ENCODE measurements at regions of chr4 and their contacts with region 1.

Region 1: DNA sequence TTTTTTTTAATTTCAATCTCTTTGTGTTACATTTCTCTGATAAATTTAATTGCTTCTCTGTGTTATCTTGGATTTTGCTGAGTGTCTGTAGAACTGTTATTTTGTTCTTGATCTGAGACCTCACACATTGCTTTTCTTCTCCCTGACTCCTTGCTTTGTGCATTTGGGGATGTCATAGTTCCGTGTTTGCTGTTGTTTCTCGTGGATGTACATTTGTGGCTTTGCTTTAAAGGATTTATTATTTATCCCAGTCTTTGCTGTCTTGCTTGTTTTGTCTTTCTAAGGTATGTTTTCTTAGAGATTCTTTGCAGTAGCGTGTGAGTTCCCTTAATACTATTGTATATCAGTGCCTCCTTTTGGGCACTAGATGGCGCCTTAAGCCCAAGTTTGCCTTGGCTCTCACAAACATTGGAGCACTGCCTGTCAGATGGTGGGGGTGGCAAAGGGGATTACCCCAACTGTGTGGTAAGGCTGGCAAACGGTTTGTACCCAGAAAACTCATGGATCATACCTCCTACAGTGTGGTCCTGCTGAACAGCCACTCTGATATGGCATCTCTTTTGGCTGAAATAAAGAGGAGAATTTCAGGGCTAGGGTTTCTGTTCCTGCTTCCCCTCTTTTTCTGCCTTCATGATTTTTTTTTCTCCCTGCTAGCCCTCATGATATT is 96.4 kb downstream of the PGRMC2 start:
- DNase-seq: peak; percentile 84
- H3K4me3 Mint-ChIP-seq: no peak overlapping the region
- H3K27ac Mint-ChIP-seq: no peak overlapping the region
- H3K4me1 Mint-ChIP-seq: no peaks in the 10 kb centered on the region
- H3K27me3 Mint-ChIP-seq: no peaks in the 10 kb centered on the region

Region 2: DNA sequence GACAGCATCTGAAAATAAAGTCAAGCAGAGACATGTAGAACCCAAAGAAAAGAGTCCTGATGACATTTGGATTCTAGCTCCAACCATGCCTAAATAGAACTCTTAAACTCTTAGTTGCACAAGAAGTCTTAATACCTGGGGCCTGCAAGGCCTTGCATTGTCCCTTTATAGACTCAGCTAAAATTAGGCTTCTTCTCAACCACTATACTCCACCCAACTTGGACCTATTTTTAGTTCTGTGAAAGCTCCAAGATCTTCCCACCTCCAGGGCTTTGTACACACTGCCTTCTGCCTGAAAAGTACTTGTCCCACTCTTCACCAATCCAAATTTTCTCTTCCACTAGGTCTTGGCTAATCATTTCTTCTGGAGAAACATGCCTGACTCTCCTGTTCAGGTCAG is 274.1 kb before region 1 on chr4:
- CTCF ChIA-PET with region 1: no interaction called
- intact Hi-C with region 1: no loop called
- DNase-seq: no peak
- H3K4me3 Mint-ChIP-seq: no peak overlapping the region
- H3K27ac Mint-ChIP-seq: no peak overlapping the region
- H3K4me1 Mint-ChIP-seq: no peaks in the 10 kb centered on the region
- H3K27me3 Mint-ChIP-seq: no peaks in the 10 kb centered on the region

Region 3: DNA sequence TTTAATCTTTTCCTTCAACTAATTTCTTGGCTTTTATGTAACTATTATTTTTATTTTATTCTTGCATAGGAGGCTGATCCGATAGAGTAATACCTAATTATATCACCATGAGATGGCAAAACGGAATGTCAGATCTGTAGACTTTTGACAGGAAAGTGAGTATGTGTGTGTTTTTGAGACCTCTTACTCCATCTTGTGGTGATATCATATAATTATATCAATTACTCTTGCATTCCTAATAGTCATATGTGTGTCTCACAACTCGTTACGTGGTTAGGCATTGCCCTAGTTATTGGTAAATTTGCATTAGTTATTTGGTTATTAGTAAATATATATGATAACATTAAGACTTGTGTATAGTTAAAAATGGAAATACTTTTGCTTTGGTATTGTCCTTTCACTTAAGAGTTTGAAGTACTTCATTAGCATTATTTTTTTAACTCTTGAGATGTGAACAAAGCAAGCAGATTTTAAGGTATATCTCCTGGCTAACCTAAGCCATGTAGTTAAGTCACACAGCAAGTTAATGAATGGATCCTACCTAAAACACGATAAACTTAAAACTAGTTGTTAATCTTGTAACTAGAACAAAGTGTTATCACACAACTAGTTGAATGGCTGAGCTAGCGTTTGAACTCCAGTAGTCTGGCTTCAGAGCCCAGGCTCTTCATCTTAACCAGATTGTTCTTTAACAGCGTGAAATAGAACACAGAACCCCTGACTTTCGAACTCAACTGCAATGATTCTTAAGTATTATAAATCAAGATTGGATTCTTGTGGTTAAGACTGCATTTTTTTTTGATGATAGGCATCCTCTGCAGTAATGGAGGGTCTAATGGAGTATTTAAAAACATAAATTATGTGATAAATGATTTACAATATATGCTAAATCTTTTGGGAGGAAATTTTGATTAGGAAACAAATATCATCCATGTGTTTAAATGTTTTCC is 29.3 kb after region 1 on chr4:
- CTCF ChIA-PET with region 1: interaction called, 3 read pairs
- intact Hi-C with region 1: loop called (anchors 2 kb)
- DNase-seq: no peak
- H3K4me3 Mint-ChIP-seq: no peak overlapping the region
- H3K27ac Mint-ChIP-seq: no peak overlapping the region
- H3K4me1 Mint-ChIP-seq: no peaks in the 10 kb centered on the region
- H3K27me3 Mint-ChIP-seq: no peaks in the 10 kb centered on the region

Region 4: GRCh38 chr4:128310266-128310697 is 119.0 kb after region 1 on chr4:
- CTCF ChIA-PET with region 1: no interaction called
- intact Hi-C with region 1: no loop called
- DNase-seq: no peak
- H3K4me3 Mint-ChIP-seq: no peak overlapping the region
- H3K27ac Mint-ChIP-seq: no peak overlapping the region
- H3K4me1 Mint-ChIP-seq: no peaks in the 10 kb centered on the region
- H3K27me3 Mint-ChIP-seq: no peaks in the 10 kb centered on the region

Region 5: DNA sequence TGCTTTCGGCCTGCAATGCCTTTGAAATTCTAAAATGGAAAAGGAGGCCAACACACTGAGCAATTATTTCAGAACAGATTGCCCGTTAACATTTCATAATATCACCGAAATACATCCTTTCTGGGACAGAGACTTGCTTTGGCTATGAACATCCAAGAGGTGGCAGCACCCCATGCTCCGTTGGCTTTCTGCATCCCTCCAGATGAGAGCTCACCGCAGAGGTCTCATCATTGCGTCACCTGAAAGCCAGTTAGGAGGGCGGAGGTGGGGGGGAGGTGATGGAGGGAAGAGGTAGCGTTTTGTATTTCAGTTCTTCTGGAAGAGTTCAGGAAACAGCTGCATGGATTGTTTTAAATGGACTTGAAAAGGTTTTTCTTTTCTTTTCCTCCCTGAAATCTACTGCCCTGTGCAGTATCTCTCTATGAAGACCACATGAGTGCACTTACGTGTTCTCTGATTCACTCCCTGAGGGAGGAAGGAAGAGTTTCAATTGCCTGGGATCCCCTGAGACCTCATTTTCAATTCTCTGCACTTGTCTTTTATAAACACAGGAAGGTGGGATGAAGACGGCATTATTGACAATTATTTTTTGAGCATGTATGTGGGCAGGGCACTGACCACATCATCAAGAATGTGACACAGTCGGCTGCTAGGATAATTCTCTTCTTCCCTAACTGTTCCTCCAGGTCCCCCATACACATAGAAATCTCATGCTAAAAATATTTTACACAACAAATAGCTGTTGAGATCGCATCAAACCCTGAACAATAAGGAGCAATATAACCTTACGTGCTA is 263.2 kb after region 1 on chr4:
- CTCF ChIA-PET with region 1: interaction called, 3 read pairs
- intact Hi-C with region 1: loop called (anchors 1 kb)
- DNase-seq: peak; percentile 84
- H3K4me3 Mint-ChIP-seq: peak overlapping the region; percentile 21
- H3K27ac Mint-ChIP-seq: no peak overlapping the region
- H3K4me1 Mint-ChIP-seq: peaks cover 8% of the 10 kb centered on the region
- H3K27me3 Mint-ChIP-seq: no peaks in the 10 kb centered on the region

Region 6: GRCh38 chr4:128574706-128575105 is 383.5 kb after region 1 on chr4:
- CTCF ChIA-PET with region 1: interaction called, 4 read pairs
- intact Hi-C with region 1: loop called (anchors 2 kb)
- DNase-seq: peak; percentile 91
- H3K4me3 Mint-ChIP-seq: no peak overlapping the region
- H3K27ac Mint-ChIP-seq: no peak overlapping the region
- H3K4me1 Mint-ChIP-seq: no peaks in the 10 kb centered on the region
- H3K27me3 Mint-ChIP-seq: peaks cover 6% of the 10 kb centered on the region

Region 7: GRCh38 chr4:128863312-128864075 is 672.2 kb after region 1 on chr4:
- CTCF ChIA-PET with region 1: interaction called, 3 read pairs
- intact Hi-C with region 1: loop called (anchors 1 kb)
- DNase-seq: peak; percentile 75
- H3K4me3 Mint-ChIP-seq: no peak overlapping the region
- H3K27ac Mint-ChIP-seq: peak overlapping the region; percentile 62
- H3K4me1 Mint-ChIP-seq: peaks cover 48% of the 10 kb centered on the region
- H3K27me3 Mint-ChIP-seq: no peaks in the 10 kb centered on the region

Region 8: DNA sequence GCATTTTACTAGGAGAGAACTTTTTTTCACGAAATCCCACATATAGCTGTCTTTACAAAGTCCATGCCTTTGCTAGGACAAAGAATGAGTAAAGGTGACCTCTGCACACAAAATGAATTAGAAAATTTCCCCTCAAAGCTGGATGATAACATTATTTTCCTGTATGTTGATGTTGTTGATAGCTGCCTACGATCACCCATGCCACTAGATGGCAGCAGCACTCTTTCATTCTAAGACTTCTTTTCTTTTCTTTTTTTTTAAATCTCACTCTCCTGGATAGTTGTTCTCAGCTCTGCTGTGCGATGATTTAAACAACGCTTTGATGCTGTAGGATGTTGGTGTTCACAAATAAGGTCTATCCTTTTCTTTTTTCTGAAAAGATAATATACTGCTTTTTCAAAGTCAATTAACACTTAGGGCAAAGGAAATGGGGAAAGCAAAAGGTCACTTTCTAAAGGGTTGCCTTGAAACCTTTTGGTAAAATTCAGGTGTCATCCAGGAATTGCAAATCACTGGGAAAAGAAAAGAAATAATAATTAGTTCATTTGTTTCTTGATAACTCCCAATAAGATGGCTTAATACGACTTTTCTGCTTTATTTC is 1171.5 kb after region 1 on chr4:
- CTCF ChIA-PET with region 1: no interaction called
- intact Hi-C with region 1: loop called (anchors 10 kb)
- DNase-seq: peak; percentile 61
- H3K4me3 Mint-ChIP-seq: no peak overlapping the region
- H3K27ac Mint-ChIP-seq: no peak overlapping the region
- H3K4me1 Mint-ChIP-seq: no peaks in the 10 kb centered on the region
- H3K27me3 Mint-ChIP-seq: peaks cover 8% of the 10 kb centered on the region